ENCODE measurements at regions of chr14 and their contacts with region 1.

Region 1: GRCh38 chr14:103067233-103067954 is 10.0 kb upstream of the CDC42BPB start:
- DNase-seq: peak; percentile 92 to 100
- H3K4me3 ChIP-seq: peak overlapping the region; percentile 20; the same call in 1 of the 2 replicates
- H3K27ac ChIP-seq: peak overlapping the region; percentile 94
- H3K4me1 ChIP-seq: peaks cover 60% of the 10 kb centered on the region
- H3K27me3 ChIP-seq: no peaks in the 10 kb centered on the region
- CTCF ChIP-seq: no peak

Region 2: DNA sequence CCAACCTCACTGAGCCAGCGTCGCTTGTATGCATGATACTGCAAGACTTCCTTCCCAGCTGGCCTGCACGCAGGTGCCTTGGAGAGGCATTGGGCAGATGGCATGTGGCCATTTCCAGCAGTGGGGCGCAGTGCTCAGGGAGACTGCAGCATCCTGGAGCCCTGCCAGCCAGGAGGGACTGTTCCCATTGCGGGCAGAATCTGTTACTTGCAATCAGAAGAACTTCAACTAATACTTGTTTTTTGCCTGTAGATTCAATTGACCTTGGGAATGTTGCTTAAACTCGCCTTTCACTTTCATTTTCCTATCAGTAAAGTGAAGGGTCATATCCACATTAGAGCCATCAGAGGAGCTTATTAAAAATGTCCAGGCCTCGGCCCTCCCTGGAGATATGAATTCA is 587.6 kb before region 1 on chr14:
- CTCF ChIA-PET with region 1: no interaction called
- POLR2A ChIA-PET with region 1: interaction called, 14 read pairs
- intact Hi-C with region 1: no loop called
- DNase-seq: no peak
- H3K4me3 ChIP-seq: no peak overlapping the region
- H3K27ac ChIP-seq: no peak overlapping the region
- H3K4me1 ChIP-seq: peaks cover 19% of the 10 kb centered on the region
- H3K27me3 ChIP-seq: no peaks in the 10 kb centered on the region
- CTCF ChIP-seq: no peak

Region 3: DNA sequence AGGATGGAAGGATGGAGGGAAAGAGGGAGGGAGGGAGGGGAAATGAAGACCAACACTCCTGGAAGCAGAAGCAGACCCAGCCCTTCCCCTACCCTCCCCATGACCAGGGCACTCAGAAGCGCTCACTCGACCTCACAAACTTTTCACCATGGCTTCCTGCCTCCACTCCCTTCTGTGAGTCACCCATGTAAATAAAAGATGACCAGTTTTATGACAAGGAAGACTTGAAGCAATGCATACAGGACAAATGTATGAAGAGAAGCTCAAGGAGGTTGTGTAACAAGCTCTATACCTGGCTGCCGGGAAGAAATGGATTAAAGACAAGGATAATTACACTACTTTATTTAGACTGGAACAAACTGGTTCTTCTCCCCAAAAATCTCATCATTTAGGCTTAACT is 73.9 kb before region 1 on chr14:
- CTCF ChIA-PET with region 1: no interaction called
- POLR2A ChIA-PET with region 1: no interaction called
- intact Hi-C with region 1: loop called (anchors 1 kb)
- DNase-seq: peak; percentile 80 to 100
- H3K4me3 ChIP-seq: peak overlapping the region; percentile 0; the same call in 1 of the 2 replicates
- H3K27ac ChIP-seq: peak overlapping the region; percentile 80
- H3K4me1 ChIP-seq: peaks cover 32% of the 10 kb centered on the region
- H3K27me3 ChIP-seq: no peaks in the 10 kb centered on the region
- CTCF ChIP-seq: no peak

Region 4: GRCh38 chr14:103023881-103024473 is 43.4 kb before region 1 on chr14:
- CTCF ChIA-PET with region 1: interaction called, 3 read pairs
- POLR2A ChIA-PET with region 1: no interaction called
- intact Hi-C with region 1: loop called (anchors 2 kb)
- DNase-seq: no peak
- H3K4me3 ChIP-seq: no peak overlapping the region
- H3K27ac ChIP-seq: peak overlapping the region; percentile 89
- H3K4me1 ChIP-seq: peaks cover 63% of the 10 kb centered on the region
- H3K27me3 ChIP-seq: no peaks in the 10 kb centered on the region
- CTCF ChIP-seq: no peak

Region 5: GRCh38 chr14:103045371-103045869 is 22.0 kb before region 1 on chr14:
- CTCF ChIA-PET with region 1: no interaction called
- POLR2A ChIA-PET with region 1: no interaction called
- intact Hi-C with region 1: no loop called
- DNase-seq: no peak
- H3K4me3 ChIP-seq: no peak overlapping the region
- H3K27ac ChIP-seq: no peak overlapping the region
- H3K4me1 ChIP-seq: peaks cover 8% of the 10 kb centered on the region; the same call in 1 of the 2 replicates
- H3K27me3 ChIP-seq: no peaks in the 10 kb centered on the region
- CTCF ChIP-seq: no peak

Region 6: GRCh38 chr14:103180331-103180730 is 112.9 kb after region 1 on chr14:
- CTCF ChIA-PET with region 1: no interaction called
- POLR2A ChIA-PET with region 1: no interaction called
- intact Hi-C with region 1: no loop called
- DNase-seq: no peak
- H3K4me3 ChIP-seq: no peak overlapping the region
- H3K27ac ChIP-seq: no peak overlapping the region
- H3K4me1 ChIP-seq: peaks cover 20% of the 10 kb centered on the region
- H3K27me3 ChIP-seq: no peaks in the 10 kb centered on the region
- CTCF ChIP-seq: no peak

Region 7: DNA sequence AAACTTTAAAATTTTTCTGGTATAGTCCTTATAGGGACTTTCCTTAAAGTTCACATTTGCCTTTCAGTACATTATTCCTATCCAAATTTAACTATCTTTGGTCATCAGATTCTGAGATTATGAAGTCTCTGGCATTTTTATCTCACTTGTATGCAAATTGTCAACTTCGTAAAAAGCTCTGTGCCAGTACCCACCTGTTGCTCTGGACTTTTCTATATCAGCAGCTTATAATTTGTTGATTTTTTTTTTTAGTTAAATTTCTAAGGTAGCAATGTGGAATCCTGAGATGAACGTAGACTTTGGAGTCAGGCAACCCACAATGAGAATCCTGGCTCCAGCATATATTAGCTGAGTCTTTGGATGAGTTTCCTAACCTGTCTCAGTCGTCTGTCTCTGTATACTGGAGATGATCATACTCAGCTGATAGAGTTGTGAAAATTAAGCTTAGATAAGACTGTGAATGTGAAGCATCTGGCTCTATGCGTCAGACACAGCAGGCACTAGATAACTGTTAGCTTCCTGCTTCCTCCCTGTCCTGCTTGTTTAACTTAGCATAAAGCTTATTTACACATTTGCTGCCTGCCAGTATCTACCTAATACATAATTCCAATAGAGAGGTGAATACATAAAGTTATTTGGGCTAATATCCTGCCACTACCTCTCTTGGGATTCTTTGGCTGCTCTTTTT is 377.6 kb after region 1 on chr14:
- CTCF ChIA-PET with region 1: interaction called, 10 read pairs
- POLR2A ChIA-PET with region 1: no interaction called
- intact Hi-C with region 1: no loop called
- DNase-seq: no peak
- H3K4me3 ChIP-seq: no peak overlapping the region
- H3K27ac ChIP-seq: 0 out of 2 replicates have a peak overlapping the region, but pooled peaks have one; percentile 2
- H3K4me1 ChIP-seq: no peaks in the 10 kb centered on the region
- H3K27me3 ChIP-seq: no peaks in the 10 kb centered on the region
- CTCF ChIP-seq: no peak